Activated naive CD4-positive, alpha-beta T cell treated with anti-CD3 and anti-CD28 coated beads for 36 hours (primary cell): ENCODE measurements at regions of chr4 and their contacts with region 1.

Region 1: DNA sequence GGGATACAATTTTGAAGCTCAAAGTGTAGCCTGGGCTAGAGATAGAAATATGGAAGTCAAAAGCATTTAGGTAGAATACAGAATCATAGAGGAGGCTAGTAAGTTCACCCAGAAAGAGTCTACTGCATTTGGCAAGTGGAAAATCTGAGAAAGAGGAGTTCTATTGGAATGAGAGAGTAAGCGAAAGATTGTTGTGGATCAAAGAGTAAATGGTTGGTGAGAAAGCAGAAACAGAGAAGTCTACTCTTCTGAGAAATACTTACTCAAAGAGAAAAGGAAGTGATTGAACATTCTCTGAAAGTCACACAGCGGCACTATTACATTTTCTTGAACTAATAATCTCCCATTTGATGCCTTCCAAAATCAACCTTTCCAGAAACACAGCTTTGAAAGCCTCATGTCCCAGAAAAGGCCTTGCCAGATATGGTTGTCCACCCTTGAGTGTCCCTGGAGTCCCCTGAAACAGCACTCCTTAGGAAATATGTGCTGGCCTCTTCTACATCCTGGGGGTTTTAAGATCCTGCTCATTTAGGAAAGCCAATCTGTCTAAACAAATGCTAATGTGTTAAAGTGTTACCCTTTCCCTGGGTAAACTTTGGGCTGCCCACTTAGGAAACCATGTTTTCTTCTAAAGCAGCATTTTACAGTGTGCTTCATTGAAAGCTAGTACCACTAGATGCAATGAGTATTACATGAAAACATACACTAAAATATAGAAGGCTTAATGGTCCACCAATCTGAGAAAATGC is 132.6 kb downstream of the INPP4B start:
- DNase-seq: no peak
- H3K4me3 Mint-ChIP-seq: peak overlapping the region; percentile 9
- H3K27ac Mint-ChIP-seq: peak overlapping the region; percentile 92
- H3K4me1 Mint-ChIP-seq: peaks cover 76% of the 10 kb centered on the region
- H3K27me3 Mint-ChIP-seq: no peaks in the 10 kb centered on the region

Region 2: DNA sequence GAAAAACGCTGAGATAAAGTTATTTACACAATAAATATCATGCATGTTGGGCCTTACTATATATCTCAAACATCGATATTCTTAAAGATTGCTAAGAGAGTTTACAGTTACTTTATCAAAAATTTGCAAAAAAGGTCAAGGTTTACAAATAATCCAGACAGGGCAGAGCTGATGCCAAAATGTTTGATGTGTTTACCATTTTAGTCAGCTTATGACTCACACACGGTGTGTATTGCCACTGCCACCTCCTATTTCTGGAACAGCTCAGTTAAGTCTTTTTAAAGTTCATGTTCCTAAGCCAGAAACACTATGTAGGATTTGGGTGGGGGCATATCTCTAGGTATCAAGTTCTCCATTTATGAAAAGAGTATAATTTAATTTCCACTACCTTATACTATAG is 447.9 kb before region 1 on chr4:
- CTCF ChIA-PET with region 1: no interaction called
- intact Hi-C with region 1: loop called (anchors 5 kb)
- DNase-seq: peak; percentile 56
- H3K4me3 Mint-ChIP-seq: peak overlapping the region; percentile 26
- H3K27ac Mint-ChIP-seq: peak overlapping the region; percentile 88
- H3K4me1 Mint-ChIP-seq: peaks cover 84% of the 10 kb centered on the region
- H3K27me3 Mint-ChIP-seq: no peaks in the 10 kb centered on the region

Region 3: DNA sequence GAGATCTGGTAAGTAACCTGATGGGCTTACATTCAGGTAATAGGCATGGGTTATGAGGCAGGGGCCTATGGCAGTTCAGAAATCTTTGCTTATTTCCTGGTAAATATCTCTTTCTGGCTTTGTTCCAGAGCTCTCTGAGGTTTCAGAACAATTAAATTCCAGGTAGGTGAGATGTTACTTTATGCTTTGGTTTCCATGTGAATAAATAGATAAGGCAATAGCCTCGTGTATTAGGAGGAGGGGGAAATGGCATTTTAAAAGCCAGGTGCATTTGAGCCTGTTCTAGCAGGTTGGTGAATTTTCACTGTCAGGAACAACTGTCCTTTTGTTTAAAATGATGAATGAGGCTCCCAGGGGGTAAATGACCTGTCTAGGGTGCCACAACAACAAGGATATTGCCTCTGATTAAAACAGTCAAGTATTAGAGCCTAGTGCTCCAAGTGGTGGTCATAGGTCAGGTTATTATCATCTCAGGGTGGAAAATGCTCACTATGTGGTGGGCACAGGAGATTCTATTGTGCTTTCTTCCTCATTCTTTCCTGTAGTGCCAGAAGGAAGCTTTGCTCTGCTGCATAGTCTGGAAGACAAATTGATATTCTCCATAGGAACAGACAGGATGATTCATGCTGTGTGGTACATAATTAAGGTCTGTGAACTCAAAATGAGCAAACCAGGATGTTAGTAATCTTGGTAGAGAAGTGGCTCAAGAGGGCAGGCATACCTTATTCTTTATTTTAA is 163.6 kb before region 1 on chr4:
- CTCF ChIA-PET with region 1: no interaction called
- intact Hi-C with region 1: loop called (anchors 2 kb)
- DNase-seq: no peak
- H3K4me3 Mint-ChIP-seq: no peak overlapping the region
- H3K27ac Mint-ChIP-seq: peak overlapping the region; percentile 60
- H3K4me1 Mint-ChIP-seq: peaks cover 71% of the 10 kb centered on the region
- H3K27me3 Mint-ChIP-seq: no peaks in the 10 kb centered on the region

Region 4: DNA sequence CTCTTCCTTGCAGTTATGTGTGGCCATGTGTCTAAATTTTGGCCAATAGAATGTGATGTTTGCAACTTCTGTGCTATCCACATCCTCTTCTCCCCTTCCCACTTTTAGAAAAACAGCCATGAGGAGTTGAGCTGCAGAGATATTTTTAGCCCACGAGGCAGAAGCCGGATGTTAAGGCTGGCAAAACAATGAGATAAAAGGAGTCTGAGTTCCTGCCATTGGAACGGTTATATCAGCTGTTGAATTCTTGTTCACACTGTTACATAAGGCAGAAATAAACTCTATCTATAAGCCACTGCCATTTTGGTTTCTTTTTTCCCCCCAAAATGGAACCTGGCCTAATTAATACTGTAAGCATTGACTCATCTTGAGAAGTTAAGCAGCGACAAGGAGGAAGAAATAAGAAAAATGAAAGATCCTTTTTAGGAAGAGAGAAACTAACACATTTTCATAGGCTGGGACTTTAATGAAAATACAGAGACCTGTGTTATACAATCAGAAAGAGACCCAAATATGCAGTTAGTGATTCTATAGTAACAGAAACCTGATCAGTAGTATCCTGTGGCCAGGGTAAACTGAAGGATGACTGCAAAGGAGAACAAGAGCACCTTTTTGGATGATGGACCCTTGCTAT is 67.9 kb before region 1 on chr4:
- CTCF ChIA-PET with region 1: interaction called, 5 read pairs
- intact Hi-C with region 1: loop called (anchors 2 kb)
- DNase-seq: peak; percentile 8
- H3K4me3 Mint-ChIP-seq: peak overlapping the region; percentile 3
- H3K27ac Mint-ChIP-seq: peak overlapping the region; percentile 79
- H3K4me1 Mint-ChIP-seq: peaks cover 18% of the 10 kb centered on the region
- H3K27me3 Mint-ChIP-seq: no peaks in the 10 kb centered on the region

Region 5: GRCh38 chr4:142696334-142697122 is 16.9 kb before region 1 on chr4:
- CTCF ChIA-PET with region 1: interaction called, 5 read pairs
- intact Hi-C with region 1: loop called (anchors 2 kb)
- DNase-seq: peak; percentile 37
- H3K4me3 Mint-ChIP-seq: peak overlapping the region; percentile 55
- H3K27ac Mint-ChIP-seq: peak overlapping the region; percentile 93
- H3K4me1 Mint-ChIP-seq: peaks cover 62% of the 10 kb centered on the region
- H3K27me3 Mint-ChIP-seq: no peaks in the 10 kb centered on the region

Region 6: GRCh38 chr4:142817442-142817841 is 104.0 kb after region 1 on chr4:
- CTCF ChIA-PET with region 1: no interaction called
- intact Hi-C with region 1: loop called (anchors 2 kb)
- DNase-seq: peak; percentile 80
- H3K4me3 Mint-ChIP-seq: peak overlapping the region; percentile 27
- H3K27ac Mint-ChIP-seq: peak overlapping the region; percentile 30
- H3K4me1 Mint-ChIP-seq: peaks cover 23% of the 10 kb centered on the region
- H3K27me3 Mint-ChIP-seq: no peaks in the 10 kb centered on the region

Region 7: DNA sequence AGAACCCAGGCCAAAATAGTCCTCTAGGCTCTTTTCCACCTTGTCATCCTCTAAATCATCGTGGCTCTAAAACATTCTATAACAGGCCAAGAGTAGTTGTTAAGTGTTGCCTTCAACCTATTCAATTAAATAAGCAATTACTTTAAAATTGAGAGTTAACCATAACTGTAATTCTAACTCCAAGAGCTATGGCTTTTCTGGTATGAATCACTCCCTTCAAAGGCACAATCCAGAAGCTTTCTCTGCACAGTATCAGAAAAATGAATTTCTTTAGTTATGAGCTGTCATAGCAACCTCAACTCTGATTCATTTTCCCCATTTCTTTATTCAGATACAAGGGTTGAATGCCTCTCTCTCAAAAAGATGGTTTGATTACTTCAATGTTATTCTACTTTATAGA is 110.9 kb after region 1 on chr4:
- CTCF ChIA-PET with region 1: no interaction called
- intact Hi-C with region 1: loop called (anchors 1 kb)
- DNase-seq: no peak
- H3K4me3 Mint-ChIP-seq: peak overlapping the region; percentile 5
- H3K27ac Mint-ChIP-seq: peak overlapping the region; percentile 86
- H3K4me1 Mint-ChIP-seq: peaks cover 18% of the 10 kb centered on the region
- H3K27me3 Mint-ChIP-seq: no peaks in the 10 kb centered on the region